Psoas muscle (tissue), 8 donors: ENCODE measurements at regions of chr14 and their contacts with region 1.

Region 1: DNA sequence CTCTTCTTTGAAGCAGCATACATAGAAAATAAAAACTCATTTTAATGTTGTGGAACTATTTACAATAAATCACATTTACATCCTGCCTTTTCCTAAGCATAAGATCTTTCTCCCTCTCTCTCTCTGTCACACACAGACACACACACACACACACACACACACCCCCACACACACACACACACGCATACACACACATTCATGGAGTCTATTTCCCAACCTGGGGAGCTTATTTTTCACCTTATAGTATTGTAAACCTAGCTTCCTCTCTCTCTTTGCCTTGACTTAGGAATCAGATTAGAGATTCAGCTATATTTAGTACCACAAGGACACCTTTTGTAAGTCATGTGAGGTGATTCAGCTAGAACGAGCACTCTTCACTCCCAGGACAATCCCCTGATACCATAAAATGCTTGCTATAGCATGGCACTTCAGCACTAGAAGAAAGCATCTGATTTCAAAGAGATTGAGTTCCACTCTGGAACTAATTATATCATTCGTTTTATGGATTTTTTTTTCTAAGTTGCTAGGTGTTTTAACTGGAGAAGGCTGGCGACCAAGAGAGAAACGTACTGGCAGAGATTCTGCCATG is 23.6 kb downstream of the TMEM30B start:
- DNase-seq: no peak
- ATAC-seq: peak; percentile 72 to 84 (median 82)
- H3K4me3 ChIP-seq: no peak overlapping the region
- H3K27ac ChIP-seq: peak overlapping the region; percentile 82
- H3K4me1 ChIP-seq: peaks cover 50% of the 10 kb centered on the region
- H3K27me3 ChIP-seq: no peaks in the 10 kb centered on the region
- CTCF ChIP-seq: no peak

Region 2: DNA sequence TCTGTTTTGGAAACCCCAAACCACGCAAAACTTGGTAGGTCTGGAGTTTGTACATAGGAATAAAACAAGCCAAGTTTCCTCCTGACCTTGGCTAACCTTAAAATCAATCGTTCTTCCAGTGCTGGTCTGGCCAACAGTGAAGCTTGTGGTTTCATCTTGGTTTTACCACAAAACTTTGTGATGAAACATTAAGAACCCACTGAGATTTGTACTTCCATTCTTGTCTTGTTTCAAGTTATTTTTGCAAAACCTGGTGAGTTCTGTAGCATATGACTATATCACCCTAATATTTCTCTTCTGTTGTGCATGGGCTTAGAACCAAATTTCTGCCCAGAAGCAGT is 634.7 kb before region 1 on chr14:
- intact Hi-C with region 1: loop called (anchors 2 to 5 kb)
- DNase-seq: no peak
- ATAC-seq: no peak
- H3K4me3 ChIP-seq: no peak overlapping the region
- H3K27ac ChIP-seq: no peak overlapping the region
- H3K4me1 ChIP-seq: peaks cover 18% of the 10 kb centered on the region
- H3K27me3 ChIP-seq: no peaks in the 10 kb centered on the region
- CTCF ChIP-seq: no peak

Region 3: GRCh38 chr14:60753264-60754119 is 504.1 kb before region 1 on chr14:
- intact Hi-C with region 1: no loop called
- DNase-seq: no peak
- ATAC-seq: peak in 1 of 4 donors; percentile 66
- H3K4me3 ChIP-seq: no peak overlapping the region
- H3K27ac ChIP-seq: peak overlapping the region; percentile 23
- H3K4me1 ChIP-seq: peaks cover 37% of the 10 kb centered on the region
- H3K27me3 ChIP-seq: no peaks in the 10 kb centered on the region
- CTCF ChIP-seq: no peak

Region 4: DNA sequence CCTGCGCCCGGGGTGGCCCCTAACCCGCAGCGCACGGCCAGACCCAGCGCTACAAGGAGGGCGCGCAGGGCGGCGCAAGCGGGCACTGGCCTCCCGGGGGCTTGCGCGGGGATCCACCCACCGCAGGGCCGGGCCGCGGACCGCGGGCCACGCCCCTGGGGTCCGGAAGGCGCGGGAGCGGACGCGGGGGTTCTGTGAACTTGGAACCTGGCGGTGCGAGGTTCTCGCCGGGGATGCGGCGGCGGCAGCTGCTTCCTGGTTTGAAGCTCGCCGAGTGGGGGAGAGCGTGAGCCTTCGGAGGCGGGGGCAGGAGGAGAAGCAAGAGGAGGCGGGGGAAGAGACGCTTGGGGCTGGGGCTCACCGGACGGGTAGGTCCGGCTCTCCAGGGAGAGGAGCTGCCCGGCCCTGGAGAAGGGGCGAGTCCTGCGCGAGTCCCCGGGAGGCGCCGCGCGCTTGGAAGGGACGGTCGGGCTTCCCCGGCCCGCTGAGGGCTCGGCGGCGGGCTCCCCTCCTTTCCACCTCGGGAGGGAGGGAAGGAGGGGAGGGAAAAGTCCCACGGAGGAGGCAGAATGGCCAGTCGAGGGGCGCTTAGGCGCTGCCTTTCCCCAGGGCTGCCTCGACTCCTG is 63.9 kb after region 1 on chr14 and contains the start of gene PRKCH:
- intact Hi-C with region 1: no loop called
- DNase-seq: peak; percentile 72 to 85
- ATAC-seq: peak; percentile 73 to 86 (median 78)
- H3K4me3 ChIP-seq: peak within 1 kb of the TSS; percentile 83
- H3K27ac ChIP-seq: peak within 1 kb of the TSS; percentile 76
- H3K4me1 ChIP-seq: no peaks in the 10 kb centered on the region
- H3K27me3 ChIP-seq: peaks cover 0 to 11% (median 0%) of the 10 kb centered on the region in 3 donors
- CTCF ChIP-seq: peak; percentile 4
- total RNA-seq, gene PRKCH: 11.1 to 17.9 (median 15.4) TPM

Region 5: DNA sequence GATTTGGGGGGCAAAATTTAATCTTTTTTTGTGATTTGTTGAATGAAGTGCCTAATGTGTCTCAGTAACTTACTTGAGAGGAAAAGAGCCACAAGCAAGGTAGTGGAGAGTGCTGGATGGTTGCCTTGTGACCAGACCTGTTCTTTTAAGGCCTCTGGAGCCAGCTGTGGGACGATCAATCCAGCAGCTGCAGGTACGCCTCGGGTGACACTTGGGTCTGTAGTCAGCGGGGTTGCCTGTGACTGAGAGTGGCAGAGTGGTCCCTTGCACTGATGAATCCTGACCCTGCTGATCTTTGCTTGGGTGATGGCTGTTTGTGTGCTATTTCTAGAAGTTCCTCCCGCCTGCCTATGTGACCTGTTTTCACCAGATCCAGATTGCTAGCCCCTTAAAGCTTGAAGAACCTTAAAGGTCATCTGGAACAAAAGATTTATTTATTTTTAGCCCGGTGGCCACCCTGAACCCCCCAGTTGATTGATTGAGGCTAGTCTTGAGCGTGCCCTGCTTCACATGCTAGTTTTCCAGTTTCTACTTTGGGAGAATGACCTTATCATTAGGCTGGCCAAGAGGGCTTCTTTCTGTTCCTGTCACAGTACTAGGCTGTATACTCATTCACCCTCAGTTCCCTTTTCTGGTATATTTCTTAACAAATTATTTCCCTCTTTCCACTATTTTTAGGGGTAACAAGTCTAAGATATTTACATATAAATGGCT is 87.0 kb after region 1 on chr14:
- intact Hi-C with region 1: no loop called
- DNase-seq: no peak
- ATAC-seq: peak; percentile 71 to 87 (median 74)
- H3K4me3 ChIP-seq: peak overlapping the region; percentile 13
- H3K27ac ChIP-seq: peak overlapping the region; percentile 65
- H3K4me1 ChIP-seq: peaks cover 26% of the 10 kb centered on the region
- H3K27me3 ChIP-seq: no peaks in the 10 kb centered on the region
- CTCF ChIP-seq: no peak